ENCODE measurements at regions of chr4 and their contacts with region 1.

Region 1: GRCh38 chr4:55184600-55185523 is 59.5 kb upstream of the KDR start:
- DNase-seq: peak; percentile 52
- ATAC-seq: no peak
- H3K4me3 Mint-ChIP-seq: no peak overlapping the region
- H3K27ac Mint-ChIP-seq: no peak overlapping the region
- H3K4me1 Mint-ChIP-seq: no peaks in the 10 kb centered on the region
- H3K27me3 Mint-ChIP-seq: peaks cover 7% of the 10 kb centered on the region

Region 2: GRCh38 chr4:54625125-54625790 is 559.6 kb before region 1 on chr4:
- CTCF ChIA-PET with region 1: no interaction called
- POLR2A ChIA-PET with region 1: no interaction called
- intact Hi-C with region 1: no loop called
- DNase-seq: no peak
- ATAC-seq: no peak
- H3K4me3 Mint-ChIP-seq: no peak overlapping the region
- H3K27ac Mint-ChIP-seq: no peak overlapping the region
- H3K4me1 Mint-ChIP-seq: no peaks in the 10 kb centered on the region
- H3K27me3 Mint-ChIP-seq: peaks cover 17% of the 10 kb centered on the region

Region 3: GRCh38 chr4:55321707-55322264 is 136.9 kb after region 1 on chr4:
- CTCF ChIA-PET with region 1: interaction called, 11 read pairs
- POLR2A ChIA-PET with region 1: no interaction called
- intact Hi-C with region 1: loop called (anchors 1 to 5 kb)
- DNase-seq: peak; percentile 85
- ATAC-seq: no peak
- H3K4me3 Mint-ChIP-seq: no peak overlapping the region
- H3K27ac Mint-ChIP-seq: no peak overlapping the region
- H3K4me1 Mint-ChIP-seq: peaks cover 35% of the 10 kb centered on the region
- H3K27me3 Mint-ChIP-seq: peaks cover 2% of the 10 kb centered on the region

Region 4: GRCh38 chr4:55554453-55555030 is 369.7 kb after region 1 on chr4:
- CTCF ChIA-PET with region 1: no interaction called
- POLR2A ChIA-PET with region 1: no interaction called
- intact Hi-C with region 1: loop called in 1 of 2 experiments (anchors 10 kb)
- DNase-seq: no peak
- ATAC-seq: no peak
- H3K4me3 Mint-ChIP-seq: no peak overlapping the region
- H3K27ac Mint-ChIP-seq: no peak overlapping the region
- H3K4me1 Mint-ChIP-seq: peaks cover 10% of the 10 kb centered on the region
- H3K27me3 Mint-ChIP-seq: peaks cover 24% of the 10 kb centered on the region